ENCODE measurements at regions of chr17 and their contacts with region 1.

Region 1: GRCh38 chr17:794876-795275 is 12.7 kb downstream of the MRM3 start:
- DNase-seq: peak in 1 of 2 experiments; percentile 83
- H3K4me3 ChIP-seq: no peak overlapping the region
- H3K27ac ChIP-seq: 0 out of 2 replicates have a peak overlapping the region, but pooled peaks have one; percentile 0
- H3K4me1 ChIP-seq: peaks cover 0 to 13% (median 2%) of the 10 kb centered on the region in 4 experiments; a peak in 5 of 7 replicates
- H3K27me3 ChIP-seq: no peaks in the 10 kb centered on the region
- CTCF ChIP-seq: peak; percentile 86 to 93 (median 92)
- EP300 ChIP-seq: no peak
- POLR2A ChIP-seq: no peak
- RAD21 ChIP-seq: peak; percentile 93 to 95

Region 2: DNA sequence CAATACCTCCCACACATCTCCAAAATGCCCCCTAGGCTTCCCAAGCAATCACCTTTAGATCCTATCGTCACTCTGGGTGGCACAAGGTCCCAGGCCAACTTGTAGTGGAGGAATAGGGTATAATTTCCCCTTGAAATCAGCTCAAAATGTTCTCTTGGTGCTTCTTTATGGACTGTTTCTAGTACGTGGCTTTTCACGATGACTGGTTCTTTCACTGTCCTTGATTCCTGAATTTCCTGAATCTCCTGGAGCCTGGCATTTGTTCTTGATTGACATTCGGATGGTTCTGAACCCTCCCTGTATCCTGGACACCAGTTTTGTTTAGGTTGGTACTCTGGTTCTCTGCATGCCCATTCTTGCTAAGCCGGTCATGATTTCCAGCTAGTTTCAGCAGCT is 73.3 kb before region 1 on chr17:
- CTCF ChIA-PET with region 1: no interaction called
- POLR2A ChIA-PET with region 1: no interaction called
- DNase-seq: no peak
- H3K4me3 ChIP-seq: no peak overlapping the region
- H3K27ac ChIP-seq: no peak overlapping the region
- H3K4me1 ChIP-seq: peaks cover 5 to 8% (median 6%) of the 10 kb centered on the region in 4 experiments; a peak in 6 of 7 replicates
- H3K27me3 ChIP-seq: no peaks in the 10 kb centered on the region
- CTCF ChIP-seq: no peak
- EP300 ChIP-seq: no peak
- POLR2A ChIP-seq: no peak
- RAD21 ChIP-seq: no peak

Region 3: DNA sequence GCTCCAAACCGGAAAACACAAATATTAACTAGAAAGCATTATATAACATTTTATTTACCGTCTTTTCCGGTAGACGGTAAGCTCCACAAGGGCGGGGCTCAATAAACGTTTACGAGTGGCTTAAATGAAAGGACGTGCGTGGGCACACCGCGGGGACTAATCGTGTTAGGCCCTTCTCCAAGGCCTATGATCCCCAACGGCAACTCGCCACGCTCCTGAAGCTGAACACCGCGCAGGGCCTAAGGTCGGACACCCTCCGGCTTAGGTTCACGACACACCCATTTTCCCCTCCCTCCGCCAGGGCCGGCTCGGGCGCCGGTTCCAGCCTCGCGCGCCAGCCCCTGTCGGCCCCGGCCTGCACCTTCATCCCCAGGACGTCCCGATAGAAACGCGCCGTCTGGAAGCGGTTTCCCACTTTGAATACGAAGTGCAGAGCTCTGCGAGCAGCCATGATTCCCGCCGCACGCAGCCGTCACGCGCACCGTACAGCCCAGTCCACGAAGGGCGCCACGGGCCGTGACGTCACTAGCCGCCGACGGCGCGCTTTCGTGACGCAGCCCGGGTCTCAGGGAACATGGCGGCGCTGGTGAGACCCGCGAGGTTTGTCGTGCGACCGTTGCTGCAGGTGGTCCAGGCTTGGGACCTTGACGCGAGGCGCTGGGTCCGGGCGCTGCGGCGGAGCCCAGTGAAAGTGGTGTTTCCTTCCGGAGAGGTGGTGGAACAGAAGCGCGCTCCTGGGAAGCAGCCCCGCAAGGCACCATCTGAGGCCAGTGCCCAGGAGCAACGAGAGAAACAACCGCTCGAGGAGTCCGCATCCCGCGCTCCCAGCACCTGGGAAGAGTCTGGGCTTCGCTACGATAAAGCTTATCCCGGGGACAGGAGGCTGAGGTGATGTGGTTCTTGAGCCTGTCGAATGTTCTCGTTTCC is 12.8 kb before region 1 on chr17 and contains the starts of genes GLOD4 and MRM3:
- CTCF ChIA-PET with region 1: interaction called, 5 read pairs
- POLR2A ChIA-PET with region 1: interaction called, 21 read pairs
- DNase-seq: peak in 1 of 2 experiments; percentile 99
- H3K4me3 ChIP-seq: peak within 1 kb of the TSS; percentile 89 to 100 (median 97)
- H3K27ac ChIP-seq: peak within 1 kb of the TSS; percentile 87
- H3K4me1 ChIP-seq: 0 out of 7 replicates have a peak, but pooled peaks cover 0 to 1% (median 0%) of the 10 kb centered on the region in 4 experiments
- H3K27me3 ChIP-seq: no peaks in the 10 kb centered on the region
- CTCF ChIP-seq: peak in 1 of 3 experiments; percentile 18; a peak in 1 of 4 replicates
- EP300 ChIP-seq: no peak
- POLR2A ChIP-seq: peak; percentile 56 to 97
- RAD21 ChIP-seq: no peak; a peak in 1 of 4 replicates
- total RNA-seq, gene GLOD4: 81.3 and 85.3 TPM in 2 replicates
- total RNA-seq, gene MRM3: 20.8 and 22.3 TPM in 2 replicates

Region 4: GRCh38 chr17:879549-880442 is 84.9 kb after region 1 on chr17:
- CTCF ChIA-PET with region 1: interaction called, 14 read pairs
- POLR2A ChIA-PET with region 1: interaction called, 3 read pairs
- DNase-seq: peak; percentile 87 to 93
- H3K4me3 ChIP-seq: no peak overlapping the region
- H3K27ac ChIP-seq: no peak overlapping the region
- H3K4me1 ChIP-seq: peaks cover 2 to 38% (median 3%) of the 10 kb centered on the region in 4 experiments
- H3K27me3 ChIP-seq: no peaks in the 10 kb centered on the region
- CTCF ChIP-seq: peak; percentile 46 to 74 (median 73)
- EP300 ChIP-seq: 0 out of 3 replicates have a peak, but pooled peaks of 1 of the 2 experiments have one; percentile 32
- POLR2A ChIP-seq: no peak
- RAD21 ChIP-seq: peak; percentile 63 to 75

Region 5: GRCh38 chr17:996554-997344 is 201.9 kb after region 1 on chr17 and contains the start of gene TIMM22:
- CTCF ChIA-PET with region 1: interaction called, 43 read pairs
- POLR2A ChIA-PET with region 1: interaction called, 8 read pairs
- DNase-seq: peak; percentile 94 to 97
- H3K4me3 ChIP-seq: peak within 1 kb of the TSS; percentile 86 to 99 (median 94)
- H3K27ac ChIP-seq: peak within 1 kb of the TSS; percentile 92
- H3K4me1 ChIP-seq: peaks cover 0 to 5% (median 0%) of the 10 kb centered on the region in 4 experiments; a peak in 2 of 7 replicates
- H3K27me3 ChIP-seq: no peaks in the 10 kb centered on the region; a peak in 1 of 7 replicates
- CTCF ChIP-seq: peak; percentile 82 to 93 (median 88)
- EP300 ChIP-seq: peak; percentile 38 to 99; a peak in 2 of 3 replicates
- POLR2A ChIP-seq: peak; percentile 79 to 93
- RAD21 ChIP-seq: peak; percentile 91 to 93
- total RNA-seq, gene TIMM22: 17.2 and 17.4 TPM in 2 replicates

Region 6: DNA sequence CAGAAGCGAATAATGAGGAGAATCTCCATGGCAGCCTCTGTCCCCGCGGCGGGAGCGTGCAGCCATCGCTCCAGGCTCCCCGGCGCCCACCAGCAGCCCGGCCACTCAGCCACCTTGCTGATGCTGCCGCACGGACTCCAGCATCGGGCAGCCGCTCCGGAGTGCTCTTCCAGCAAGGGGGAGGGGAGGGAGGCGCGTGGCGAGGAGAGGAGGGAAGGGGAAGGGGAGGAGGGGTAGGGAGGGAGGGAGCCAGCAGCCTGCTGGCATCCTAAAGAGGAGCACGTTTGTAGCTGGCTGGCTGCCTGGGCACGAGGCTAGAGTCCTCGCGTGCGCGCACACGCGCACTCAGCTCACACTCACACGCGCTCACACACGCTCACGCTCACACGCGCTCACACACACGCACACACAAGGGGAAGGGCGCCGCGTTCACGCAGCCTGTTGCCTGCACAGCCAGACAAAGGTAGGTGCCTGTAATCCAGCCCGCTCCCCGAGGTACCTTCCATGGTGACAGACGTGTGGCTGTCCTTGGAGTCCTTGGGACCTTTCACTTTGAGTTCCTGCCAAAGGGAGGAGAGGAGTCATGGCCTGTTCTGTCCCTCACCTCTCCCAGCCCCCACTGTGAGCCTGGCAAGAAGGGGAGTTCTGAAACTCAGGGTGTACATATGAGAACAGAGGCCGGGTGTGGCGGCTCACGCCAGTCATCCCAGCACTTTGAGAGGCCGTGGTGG is 284.1 kb after region 1 on chr17:
- CTCF ChIA-PET with region 1: no interaction called
- POLR2A ChIA-PET with region 1: no interaction called
- DNase-seq: peak in 1 of 2 experiments; percentile 61
- H3K4me3 ChIP-seq: peak overlapping the region in 2 of 4 experiments; percentile 5 to 47; a peak in 2 of 8 replicates
- H3K27ac ChIP-seq: no peak overlapping the region
- H3K4me1 ChIP-seq: peaks cover 0 to 29% (median 17%) of the 10 kb centered on the region in 4 experiments; a peak in 6 of 7 replicates
- H3K27me3 ChIP-seq: peaks cover 0 to 2% (median 1%) of the 10 kb centered on the region in 4 experiments; a peak in 2 of 7 replicates
- CTCF ChIP-seq: no peak; a peak in 1 of 4 replicates
- EP300 ChIP-seq: no peak
- POLR2A ChIP-seq: no peak
- RAD21 ChIP-seq: no peak